ENCODE measurements at regions of chr2 and their contacts with region 1.

Region 1: DNA sequence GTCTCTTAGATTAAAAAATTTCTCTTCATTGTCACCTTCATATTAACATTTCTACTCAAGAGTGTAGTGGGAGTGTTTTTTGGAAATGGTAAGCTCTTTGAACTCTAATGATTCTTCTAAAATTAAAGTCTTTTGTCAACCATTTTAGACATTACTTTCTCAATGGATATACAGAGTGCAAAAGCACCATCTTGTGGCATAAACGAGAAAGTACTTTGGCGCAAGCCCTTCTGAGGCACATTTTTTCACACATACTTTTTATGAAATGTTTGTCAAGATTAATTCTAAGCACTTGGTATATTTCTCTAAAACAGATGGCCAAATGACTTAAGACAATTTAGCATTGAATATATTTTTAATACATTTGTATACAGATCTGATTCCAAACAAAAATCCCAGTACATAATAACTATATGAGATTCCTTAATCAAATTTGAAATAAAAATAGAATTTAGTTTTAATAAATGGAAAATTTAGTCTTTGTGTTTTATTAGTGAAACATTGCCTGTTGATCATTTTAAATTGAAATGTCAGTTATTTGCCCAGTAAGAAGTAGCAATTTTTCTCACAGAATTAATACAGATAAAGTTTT is 63.3 kb upstream of the GALNT5 start:
- H3K4me3 Mint-ChIP-seq: no peak overlapping the region
- H3K27ac Mint-ChIP-seq: no peak overlapping the region
- H3K4me1 Mint-ChIP-seq: peaks cover 9% of the 10 kb centered on the region
- H3K27me3 Mint-ChIP-seq: no peaks in the 10 kb centered on the region

Region 2: GRCh38 chr2:156619021-156619539 is 575.1 kb before region 1 on chr2:
- intact Hi-C with region 1: loop called (anchors 10 kb)
- H3K4me3 Mint-ChIP-seq: no peak overlapping the region
- H3K27ac Mint-ChIP-seq: no peak overlapping the region
- H3K4me1 Mint-ChIP-seq: no peaks in the 10 kb centered on the region
- H3K27me3 Mint-ChIP-seq: peaks cover 2% of the 10 kb centered on the region

Region 3: GRCh38 chr2:157124731-157125130 is 69.5 kb before region 1 on chr2:
- intact Hi-C with region 1: no loop called
- H3K4me3 Mint-ChIP-seq: no peak overlapping the region
- H3K27ac Mint-ChIP-seq: no peak overlapping the region
- H3K4me1 Mint-ChIP-seq: no peaks in the 10 kb centered on the region
- H3K27me3 Mint-ChIP-seq: no peaks in the 10 kb centered on the region

Measured in dendritic cell treated with granulocyte-macrophage colony-stimulating factor and Interleukin-4, amounts not matched to agents 40 ng/mL and 50 ng/mL, for 4 days (primary cell).